Endothelial cell of umbilical vein (primary cell): ENCODE measurements at regions of chr2 and their contacts with region 1.

Region 1: DNA sequence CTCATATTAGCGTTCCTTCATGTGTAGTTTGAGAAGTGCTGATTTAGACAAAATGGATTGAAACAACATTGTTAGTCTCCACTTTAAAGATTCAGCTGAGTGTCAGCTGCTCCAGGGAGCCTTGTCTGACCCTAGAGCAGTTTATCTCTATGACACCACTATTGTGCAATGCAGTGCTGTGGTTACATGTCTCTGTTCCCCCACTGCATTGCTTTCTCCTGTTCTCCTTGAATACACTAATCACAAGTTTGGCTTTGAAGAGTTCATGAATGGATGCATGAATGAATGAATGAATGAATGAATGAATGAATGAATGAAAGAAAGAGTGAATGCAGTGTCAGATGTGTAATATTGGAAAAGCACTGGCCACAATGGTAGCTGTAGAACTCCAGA is 38.3 kb downstream of the GCG start:
- DNase-seq: peak; percentile 84
- H3K4me3 ChIP-seq: peak overlapping the region in 1 of 3 experiments; percentile 10
- H3K27ac ChIP-seq: peak overlapping the region; percentile 79
- H3K4me1 ChIP-seq: peaks cover 26% of the 10 kb centered on the region
- H3K27me3 ChIP-seq: no peaks in the 10 kb centered on the region
- CTCF ChIP-seq: no peak
- POLR2A ChIP-seq: no peak

Region 2: GRCh38 chr2:161913865-161914264 is 199.9 kb before region 1 on chr2:
- CTCF ChIA-PET with region 1: no interaction called
- POLR2A ChIA-PET with region 1: no interaction called
- dilution Hi-C with region 1: no loop called
- intact Hi-C with region 1: loop called (anchors 2 kb)
- DNase-seq: peak; percentile 75
- H3K4me3 ChIP-seq: no peak overlapping the region
- H3K27ac ChIP-seq: peak overlapping the region; percentile 69
- H3K4me1 ChIP-seq: peaks cover 11% of the 10 kb centered on the region
- H3K27me3 ChIP-seq: no peaks in the 10 kb centered on the region
- CTCF ChIP-seq: no peak
- POLR2A ChIP-seq: no peak

Region 3: GRCh38 chr2:161946489-161947107 is 167.2 kb before region 1 on chr2:
- CTCF ChIA-PET with region 1: no interaction called
- POLR2A ChIA-PET with region 1: no interaction called
- dilution Hi-C with region 1: no loop called
- intact Hi-C with region 1: no loop called
- DNase-seq: peak; percentile 67
- H3K4me3 ChIP-seq: no peak overlapping the region
- H3K27ac ChIP-seq: no peak overlapping the region
- H3K4me1 ChIP-seq: no peaks in the 10 kb centered on the region
- H3K27me3 ChIP-seq: peaks cover 0 to 3% of the 10 kb centered on the region in 2 experiments
- CTCF ChIP-seq: peak; percentile 32 to 39
- POLR2A ChIP-seq: no peak

Region 4: DNA sequence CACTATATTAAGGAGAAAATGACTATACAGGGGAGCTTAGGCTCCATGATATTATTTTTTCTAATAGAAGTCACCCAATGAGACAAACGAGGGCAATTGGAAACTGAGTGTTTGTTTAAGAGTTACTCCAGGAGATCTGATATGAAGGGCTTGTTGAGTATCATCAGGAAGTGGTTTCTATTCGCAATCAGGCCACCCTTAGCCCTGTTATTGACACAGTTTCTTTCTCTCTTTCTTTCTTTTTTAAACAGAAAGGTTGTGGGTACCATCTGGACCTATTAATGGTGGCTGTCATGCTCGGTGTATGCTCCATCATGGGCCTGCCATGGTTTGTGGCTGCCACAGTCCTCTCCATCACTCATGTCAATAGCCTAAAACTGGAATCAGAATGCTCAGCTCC is 157.0 kb before region 1 on chr2:
- CTCF ChIA-PET with region 1: no interaction called
- POLR2A ChIA-PET with region 1: no interaction called
- dilution Hi-C with region 1: no loop called
- intact Hi-C with region 1: no loop called
- DNase-seq: no peak
- H3K4me3 ChIP-seq: no peak overlapping the region
- H3K27ac ChIP-seq: no peak overlapping the region
- H3K4me1 ChIP-seq: no peaks in the 10 kb centered on the region
- H3K27me3 ChIP-seq: no peaks in the 10 kb centered on the region
- CTCF ChIP-seq: no peak
- POLR2A ChIP-seq: no peak

Region 5: DNA sequence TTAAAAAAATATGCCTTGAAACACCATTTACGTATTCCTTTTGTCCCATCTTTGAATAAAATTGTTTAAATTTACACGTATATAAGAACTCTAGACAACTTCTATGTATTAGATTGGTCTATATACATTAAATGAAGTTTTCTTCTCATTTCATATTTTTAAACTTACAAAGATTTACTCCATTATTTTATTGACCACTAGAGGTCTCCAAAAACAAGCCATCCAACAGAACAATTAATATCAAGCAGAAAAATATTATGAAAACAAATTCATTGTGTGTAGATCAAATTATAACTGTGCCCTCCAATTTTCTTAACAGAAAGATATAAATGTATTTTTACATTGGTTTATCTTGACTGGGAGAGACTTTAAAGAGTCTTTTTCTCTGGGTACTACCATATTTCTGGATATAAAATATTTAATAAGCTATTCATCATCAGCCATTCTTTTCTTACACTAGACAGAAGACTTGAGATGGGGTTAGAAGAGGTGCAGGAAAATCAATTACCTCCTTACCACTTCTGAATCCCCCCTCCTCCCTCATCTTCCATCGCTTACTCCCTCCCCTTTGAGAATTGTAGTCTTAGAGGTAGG is 106.2 kb before region 1 on chr2:
- CTCF ChIA-PET with region 1: interaction called, 13 read pairs
- POLR2A ChIA-PET with region 1: no interaction called
- dilution Hi-C with region 1: no loop called
- intact Hi-C with region 1: loop called (anchors 2 kb)
- DNase-seq: peak; percentile 38
- H3K4me3 ChIP-seq: no peak overlapping the region
- H3K27ac ChIP-seq: no peak overlapping the region
- H3K4me1 ChIP-seq: no peaks in the 10 kb centered on the region
- H3K27me3 ChIP-seq: no peaks in the 10 kb centered on the region
- CTCF ChIP-seq: peak; percentile 21 to 29
- POLR2A ChIP-seq: no peak

Region 6: DNA sequence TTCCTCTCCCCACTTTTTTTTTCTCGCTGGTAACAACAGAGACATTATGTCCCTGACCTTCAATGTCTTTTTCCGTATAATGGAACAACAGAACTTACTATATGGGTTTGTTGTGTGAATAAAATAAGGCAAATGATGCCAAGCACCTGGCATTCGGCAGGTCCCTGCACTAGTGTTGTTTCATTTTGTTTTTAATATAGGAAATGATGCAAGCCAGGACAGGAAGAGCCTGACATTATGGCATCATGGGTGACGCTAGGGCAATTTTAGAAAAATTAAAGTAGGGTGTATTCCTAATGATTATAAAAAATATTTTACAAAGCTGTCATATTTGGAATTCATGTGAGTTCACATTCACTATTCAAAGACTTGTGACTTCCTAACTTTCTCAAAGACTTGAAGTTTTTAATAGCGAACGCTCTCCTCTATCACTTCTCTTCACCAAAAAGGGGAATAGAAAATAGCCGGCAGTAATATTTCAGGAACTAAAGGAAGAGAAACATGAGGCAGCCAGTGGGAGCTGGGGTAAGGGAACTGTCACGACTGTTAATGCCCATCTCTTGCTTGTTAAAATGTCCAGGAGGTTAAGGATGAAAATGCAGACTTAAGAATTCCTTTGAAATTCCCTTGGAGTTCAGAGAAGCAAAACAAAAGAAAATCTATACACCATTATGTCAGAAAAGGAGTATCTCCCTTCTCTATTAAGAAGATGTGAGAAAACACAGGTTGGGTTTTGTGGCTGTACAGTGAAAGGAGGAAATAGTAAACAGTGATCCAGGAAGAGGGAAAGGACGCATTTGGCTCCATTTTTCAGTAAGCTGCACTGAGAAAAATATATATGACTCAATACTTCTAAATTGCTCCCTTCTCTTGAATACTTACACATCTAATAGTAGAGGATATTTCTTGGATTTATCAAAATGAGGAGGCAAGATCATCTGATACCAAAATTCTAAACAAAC is 100.0 kb before region 1 on chr2:
- CTCF ChIA-PET with region 1: interaction called, 6 read pairs
- POLR2A ChIA-PET with region 1: no interaction called
- dilution Hi-C with region 1: no loop called
- intact Hi-C with region 1: loop called (anchors 2 kb)
- DNase-seq: peak; percentile 58
- H3K4me3 ChIP-seq: no peak overlapping the region
- H3K27ac ChIP-seq: no peak overlapping the region
- H3K4me1 ChIP-seq: peaks cover 11% of the 10 kb centered on the region
- H3K27me3 ChIP-seq: no peaks in the 10 kb centered on the region
- CTCF ChIP-seq: no peak
- POLR2A ChIP-seq: no peak

Region 7: DNA sequence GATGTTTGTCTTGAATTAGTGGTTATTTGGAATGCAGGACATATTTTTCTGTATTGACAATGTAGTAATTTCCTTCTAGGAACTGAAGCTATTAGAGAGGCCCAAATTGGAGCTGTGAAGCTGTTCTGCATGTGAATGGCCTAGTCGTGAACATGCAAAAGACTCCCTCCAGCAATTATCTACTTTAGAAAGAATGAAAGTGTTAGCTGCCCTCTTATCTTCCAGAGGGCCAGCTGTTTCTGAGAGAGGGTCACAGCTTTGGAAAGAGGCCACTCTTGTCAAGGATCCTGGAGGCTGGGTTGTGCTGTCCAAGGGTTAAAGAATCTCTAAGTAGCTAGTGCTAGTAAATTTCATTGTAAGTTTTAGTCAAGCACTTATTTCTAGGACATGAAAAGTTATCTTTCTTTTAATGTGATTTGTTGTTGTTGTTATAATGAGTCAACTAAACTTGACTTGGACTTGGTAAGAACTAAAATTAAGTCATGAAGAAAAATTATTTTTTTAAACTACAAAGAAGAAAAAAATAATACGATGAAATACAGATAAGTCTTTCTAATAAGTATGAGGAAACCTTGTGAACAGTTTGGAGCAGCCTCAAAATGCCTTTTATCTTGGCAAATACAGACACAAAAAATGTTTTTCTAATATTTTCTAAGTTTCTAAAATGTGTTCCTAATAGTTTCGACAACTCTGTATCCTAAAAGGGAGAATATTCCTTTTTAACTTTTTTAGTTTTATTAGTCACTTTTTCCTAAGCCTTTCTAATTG is 76.6 kb before region 1 on chr2:
- CTCF ChIA-PET with region 1: no interaction called
- POLR2A ChIA-PET with region 1: no interaction called
- dilution Hi-C with region 1: no loop called
- intact Hi-C with region 1: loop called (anchors 2 kb)
- DNase-seq: peak; percentile 30
- H3K4me3 ChIP-seq: no peak overlapping the region
- H3K27ac ChIP-seq: no peak overlapping the region
- H3K4me1 ChIP-seq: peaks cover 19% of the 10 kb centered on the region
- H3K27me3 ChIP-seq: no peaks in the 10 kb centered on the region
- CTCF ChIP-seq: no peak
- POLR2A ChIP-seq: no peak

Region 8: DNA sequence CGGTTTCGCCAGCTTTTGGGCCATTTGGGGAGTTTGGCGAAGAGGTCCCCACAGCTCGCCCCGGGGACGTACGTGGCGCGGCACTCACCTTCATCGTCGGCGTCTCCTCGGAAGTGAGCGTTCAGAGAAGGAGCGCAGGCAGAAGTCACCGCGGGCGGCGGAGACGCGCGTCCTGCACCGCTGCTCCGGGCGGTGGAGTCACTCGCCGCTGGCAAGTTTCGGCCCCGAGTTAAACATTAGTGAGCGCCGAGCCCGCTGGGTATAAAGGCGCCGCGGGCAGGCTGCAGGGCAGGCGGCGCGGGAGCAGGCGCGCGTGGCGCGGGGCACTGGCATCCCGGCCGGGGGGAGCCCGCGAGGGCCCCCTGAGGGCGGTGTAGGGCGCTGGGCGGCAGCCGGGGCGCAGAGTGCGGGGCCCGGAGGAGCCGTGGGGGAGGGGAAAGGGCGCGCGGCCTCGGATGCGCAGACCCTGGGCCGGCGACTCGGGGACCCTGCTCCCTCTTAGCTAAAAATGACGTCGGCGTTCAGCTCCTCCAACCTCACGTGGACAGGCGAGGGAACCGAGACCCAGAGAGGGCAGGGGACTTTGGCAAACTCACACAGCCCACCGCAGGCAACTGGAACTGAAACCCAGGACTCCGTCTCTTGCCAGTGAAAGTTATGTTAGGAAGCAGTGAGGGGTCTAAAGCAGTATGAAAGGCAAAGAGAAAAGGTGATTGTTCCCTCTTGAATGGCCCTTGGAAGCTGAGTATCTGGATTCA is 39.7 kb before region 1 on chr2 and contains the start of gene DPP4:
- CTCF ChIA-PET with region 1: interaction called, 3 read pairs
- POLR2A ChIA-PET with region 1: no interaction called
- dilution Hi-C with region 1: no loop called
- intact Hi-C with region 1: loop called (anchors 1 kb)
- DNase-seq: peak; percentile 26
- H3K4me3 ChIP-seq: peak within 1 kb of the TSS; percentile 57 to 68 (median 58)
- H3K27ac ChIP-seq: no peak within 1 kb of the TSS
- H3K4me1 ChIP-seq: peaks cover 26% of the 10 kb centered on the region
- H3K27me3 ChIP-seq: no peaks in the 10 kb centered on the region
- CTCF ChIP-seq: no peak
- POLR2A ChIP-seq: no peak
- total RNA-seq, gene DPP4: 3.0 and 6.2 TPM in 2 replicates

Region 9: GRCh38 chr2:162091325-162092007 is 22.3 kb before region 1 on chr2:
- CTCF ChIA-PET with region 1: interaction called, 3 read pairs
- POLR2A ChIA-PET with region 1: no interaction called
- dilution Hi-C with region 1: no loop called
- intact Hi-C with region 1: loop called (anchors 1 kb)
- DNase-seq: peak; percentile 41
- H3K4me3 ChIP-seq: no peak overlapping the region
- H3K27ac ChIP-seq: peak overlapping the region; percentile 89
- H3K4me1 ChIP-seq: peaks cover 40% of the 10 kb centered on the region
- H3K27me3 ChIP-seq: no peaks in the 10 kb centered on the region
- CTCF ChIP-seq: no peak
- POLR2A ChIP-seq: no peak